ENCODE measurements at regions of chr12 and their contacts with region 1.

Region 1: GRCh38 chr12:6752921-6753771 is at the start of gene MLF2:
- DNase-seq: peak; percentile 98
- H3K4me3 ChIP-seq: peak within 1 kb of the TSS; percentile 87
- H3K27ac ChIP-seq: peak within 1 kb of the TSS; percentile 98
- H3K27me3 ChIP-seq: no peaks in the 10 kb centered on the region
- CTCF ChIP-seq: no peak
- polyA plus RNA-seq, gene MLF2: 241 and 263 TPM in 2 replicates

Region 2: DNA sequence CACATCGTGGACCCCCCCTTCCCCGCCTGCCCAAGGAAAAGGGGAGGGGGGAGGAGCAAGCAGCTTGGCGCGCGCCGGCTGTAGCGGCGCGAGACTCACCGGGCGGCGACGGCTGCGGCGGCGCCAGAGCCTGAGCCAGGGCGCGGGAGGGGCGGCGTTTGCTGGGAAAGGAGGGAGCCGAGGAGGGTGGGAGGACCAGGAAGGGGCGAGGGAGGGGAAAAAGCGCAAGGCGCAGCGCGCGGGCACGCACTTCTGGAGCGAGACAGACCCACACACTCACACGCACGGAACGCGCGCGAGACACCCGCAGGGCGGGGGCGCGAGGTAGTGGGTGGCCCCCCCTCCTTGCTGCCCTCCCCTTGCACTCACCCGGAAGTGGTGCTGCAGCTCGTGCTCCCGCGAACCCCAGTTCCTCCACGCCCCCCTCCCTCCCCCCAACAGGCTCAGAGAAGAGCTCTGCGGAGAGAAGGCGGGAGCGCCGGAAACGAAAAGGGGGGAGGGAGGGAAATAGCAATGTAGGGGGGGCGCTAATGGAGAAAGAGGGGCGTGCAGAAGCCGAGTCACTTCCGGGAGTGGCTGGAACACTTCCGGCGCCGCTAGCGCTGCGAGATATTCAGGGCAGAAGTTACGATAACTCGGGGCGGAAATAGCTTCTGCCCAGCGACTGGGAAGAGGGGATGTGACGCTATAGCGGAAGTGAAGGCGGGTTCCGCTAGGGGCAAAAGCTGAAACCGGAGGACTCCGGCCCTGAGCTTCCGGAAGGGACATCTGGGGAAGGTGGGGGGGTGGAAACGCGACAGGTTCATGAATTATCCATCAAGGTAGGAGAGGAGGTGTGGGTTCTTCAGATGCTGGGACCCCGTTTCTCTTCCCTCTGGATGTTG is 63.9 kb before region 1 on chr12 and contains the start of gene ZNF384:
- CTCF ChIA-PET with region 1: interaction called, 8 read pairs
- POLR2A ChIA-PET with region 1: interaction called, 35 read pairs
- DNase-seq: peak; percentile 98
- H3K4me3 ChIP-seq: peak within 1 kb of the TSS; percentile 97
- H3K27ac ChIP-seq: peak within 1 kb of the TSS; percentile 90
- H3K27me3 ChIP-seq: no peaks in the 10 kb centered on the region
- CTCF ChIP-seq: peak; percentile 34; the same call in 1 of the 2 replicates
- polyA plus RNA-seq, gene ZNF384: 39.3 and 44.3 TPM in 2 replicates

Region 3: DNA sequence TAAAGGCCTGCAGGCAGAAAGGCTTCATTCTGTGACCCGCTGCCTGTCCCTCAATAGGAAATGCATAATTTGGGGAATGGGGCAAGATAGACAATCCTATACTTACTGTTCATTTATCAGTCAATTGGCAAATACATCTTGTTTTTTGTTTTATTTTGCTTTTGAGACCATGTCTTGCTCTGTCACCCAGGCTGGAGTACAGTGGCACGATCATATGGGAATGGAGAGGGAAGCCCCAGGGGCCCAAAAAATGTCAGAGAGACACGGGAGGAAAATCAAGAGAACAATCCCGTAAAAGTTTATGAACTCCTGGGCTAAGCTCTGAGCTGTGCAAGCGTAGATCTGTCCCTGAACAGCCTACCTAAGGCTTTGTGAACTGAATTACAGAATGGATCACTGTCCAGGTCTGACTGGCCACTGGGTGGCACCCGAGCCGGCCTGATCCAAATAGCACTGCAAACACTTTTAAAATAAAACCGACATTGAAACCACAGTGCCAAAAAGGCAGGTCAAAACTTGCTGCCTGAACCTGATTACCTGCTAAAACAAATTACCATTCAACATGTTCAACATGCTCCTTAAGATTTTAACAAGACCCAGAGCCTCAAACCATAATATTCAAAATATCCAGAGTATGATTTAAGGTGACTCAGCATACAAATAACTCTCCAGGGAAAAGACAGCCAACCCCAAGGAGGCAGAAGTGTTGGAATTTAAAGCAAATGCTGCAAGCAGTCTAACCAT is 17.5 kb before region 1 on chr12:
- CTCF ChIA-PET with region 1: interaction called, 24 read pairs
- POLR2A ChIA-PET with region 1: interaction called, 8 read pairs
- DNase-seq: no peak
- H3K4me3 ChIP-seq: no peak overlapping the region
- H3K27ac ChIP-seq: peak overlapping the region; percentile 22
- H3K27me3 ChIP-seq: no peaks in the 10 kb centered on the region
- CTCF ChIP-seq: peak; percentile 77

Region 4: DNA sequence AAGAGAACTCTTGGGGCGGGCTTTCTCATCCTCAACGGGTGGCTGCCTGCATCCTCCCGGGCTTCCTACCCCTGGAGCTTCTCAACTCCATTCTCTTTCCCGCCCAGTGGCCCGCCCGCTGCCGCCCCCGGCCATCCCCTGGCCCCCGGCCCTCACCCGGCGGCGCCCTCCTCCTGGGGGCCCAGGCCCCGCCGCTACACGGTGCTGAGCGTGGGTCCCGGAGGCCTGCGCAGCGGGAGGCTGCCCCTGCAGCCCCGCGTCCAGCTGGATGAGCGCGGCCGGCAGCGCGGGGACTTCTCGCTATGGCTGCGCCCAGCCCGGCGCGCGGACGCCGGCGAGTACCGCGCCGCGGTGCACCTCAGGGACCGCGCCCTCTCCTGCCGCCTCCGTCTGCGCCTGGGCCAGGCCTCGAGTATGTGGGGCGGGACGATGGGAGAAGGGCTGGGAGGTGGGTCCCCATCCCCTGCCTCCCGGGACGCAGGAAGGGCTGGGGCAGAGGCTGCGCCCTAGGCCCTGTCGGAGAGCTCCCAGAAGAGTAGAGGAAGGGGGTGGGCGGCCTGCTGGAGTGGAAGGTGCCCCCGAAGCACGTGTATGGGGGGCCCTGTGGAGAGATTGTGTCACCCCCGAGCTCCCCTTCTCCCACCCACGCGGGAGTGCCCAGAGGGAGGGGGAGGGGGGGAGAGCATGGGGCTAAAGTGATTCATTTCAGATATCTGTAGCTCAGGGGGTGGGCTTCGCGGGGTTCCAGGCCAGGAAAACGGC is 20.6 kb after region 1 on chr12:
- CTCF ChIA-PET with region 1: interaction called, 136 read pairs
- POLR2A ChIA-PET with region 1: interaction called, 89 read pairs
- DNase-seq: no peak
- H3K4me3 ChIP-seq: no peak overlapping the region
- H3K27ac ChIP-seq: no peak overlapping the region
- H3K27me3 ChIP-seq: no peaks in the 10 kb centered on the region
- CTCF ChIP-seq: no peak

Region 5: GRCh38 chr12:6786416-6787094 is 33.4 kb after region 1 on chr12:
- CTCF ChIA-PET with region 1: interaction called, 124 read pairs
- POLR2A ChIA-PET with region 1: interaction called, 11 read pairs
- DNase-seq: no peak
- H3K4me3 ChIP-seq: no peak overlapping the region
- H3K27ac ChIP-seq: no peak overlapping the region
- H3K27me3 ChIP-seq: no peaks in the 10 kb centered on the region
- CTCF ChIP-seq: no peak

Region 6: GRCh38 chr12:6810758-6811157 is 57.6 kb after region 1 on chr12:
- CTCF ChIA-PET with region 1: interaction called, 19 read pairs
- POLR2A ChIA-PET with region 1: interaction called, 6 read pairs
- DNase-seq: no peak
- H3K4me3 ChIP-seq: no peak overlapping the region
- H3K27ac ChIP-seq: no peak overlapping the region
- H3K27me3 ChIP-seq: no peaks in the 10 kb centered on the region
- CTCF ChIP-seq: no peak

Region 7: GRCh38 chr12:6833189-6833890 is 80.2 kb after region 1 on chr12:
- CTCF ChIA-PET with region 1: interaction called, 165 read pairs
- POLR2A ChIA-PET with region 1: interaction called, 26 read pairs
- DNase-seq: no peak
- H3K4me3 ChIP-seq: no peak overlapping the region
- H3K27ac ChIP-seq: no peak overlapping the region
- H3K27me3 ChIP-seq: no peaks in the 10 kb centered on the region
- CTCF ChIP-seq: no peak

Measured in AG04450 (cell line).